ENCODE measurements at regions of chr12 and their contacts with region 1.

Region 1: GRCh38 chr12:13100882-13101769 is 2.3 kb downstream of the GSG1 start:
- DNase-seq: peak; percentile 88
- H3K4me3 ChIP-seq: peak overlapping the region; percentile 67 to 74
- H3K27ac ChIP-seq: peak overlapping the region; percentile 86 to 95
- H3K4me1 ChIP-seq: peaks cover 29% of the 10 kb centered on the region
- H3K27me3 ChIP-seq: no peaks in the 10 kb centered on the region
- CTCF ChIP-seq: no peak
- POLR2A ChIP-seq: no peak

Region 2: GRCh38 chr12:12999959-13000615 is 101.0 kb before region 1 on chr12 and contains the start of gene HEBP1:
- intact Hi-C with region 1: loop called (anchors 5 kb)
- DNase-seq: peak; percentile 97
- H3K4me3 ChIP-seq: peak within 1 kb of the TSS; percentile 85 to 87
- H3K27ac ChIP-seq: peak within 1 kb of the TSS; percentile 87 to 96
- H3K4me1 ChIP-seq: peaks cover 26% of the 10 kb centered on the region
- H3K27me3 ChIP-seq: no peaks in the 10 kb centered on the region
- CTCF ChIP-seq: no peak
- POLR2A ChIP-seq: peak; percentile 45
- total RNA-seq, gene HEBP1: 48.7 to 55.6 TPM

Region 3: GRCh38 chr12:13023811-13024530 is 77.2 kb before region 1 on chr12:
- intact Hi-C with region 1: no loop called
- DNase-seq: peak; percentile 50
- H3K4me3 ChIP-seq: no peak overlapping the region
- H3K27ac ChIP-seq: no peak overlapping the region
- H3K4me1 ChIP-seq: peaks cover 5% of the 10 kb centered on the region
- H3K27me3 ChIP-seq: no peaks in the 10 kb centered on the region
- CTCF ChIP-seq: peak in 2 of 3 experiments; percentile 7 to 24
- POLR2A ChIP-seq: no peak

Region 4: GRCh38 chr12:13196130-13196921 is 95.2 kb after region 1 on chr12 and contains the start of gene EMP1:
- intact Hi-C with region 1: loop called (anchors 5 kb)
- DNase-seq: peak; percentile 92
- H3K4me3 ChIP-seq: peak within 1 kb of the TSS; percentile 53 to 66
- H3K27ac ChIP-seq: peak within 1 kb of the TSS; percentile 88 to 89
- H3K4me1 ChIP-seq: peaks cover 24% of the 10 kb centered on the region
- H3K27me3 ChIP-seq: no peaks in the 10 kb centered on the region
- CTCF ChIP-seq: no peak
- POLR2A ChIP-seq: no peak
- total RNA-seq, gene EMP1: 14.1 to 29.2 TPM